Colonic mucosa (tissue), 4 donors: ENCODE measurements at regions of chrX and their contacts with region 1.

Region 1: GRCh38 chrX:132631579-132632232 is 142.9 kb upstream of the MBNL3 start:
- DNase-seq: no peak
- H3K4me3 ChIP-seq: no peak overlapping the region
- H3K27ac ChIP-seq: no peak overlapping the region
- H3K4me1 ChIP-seq: no peaks in the 10 kb centered on the region
- H3K27me3 ChIP-seq: peaks cover 4% of the 10 kb centered on the region
- CTCF ChIP-seq: peak; percentile 26

Region 2: DNA sequence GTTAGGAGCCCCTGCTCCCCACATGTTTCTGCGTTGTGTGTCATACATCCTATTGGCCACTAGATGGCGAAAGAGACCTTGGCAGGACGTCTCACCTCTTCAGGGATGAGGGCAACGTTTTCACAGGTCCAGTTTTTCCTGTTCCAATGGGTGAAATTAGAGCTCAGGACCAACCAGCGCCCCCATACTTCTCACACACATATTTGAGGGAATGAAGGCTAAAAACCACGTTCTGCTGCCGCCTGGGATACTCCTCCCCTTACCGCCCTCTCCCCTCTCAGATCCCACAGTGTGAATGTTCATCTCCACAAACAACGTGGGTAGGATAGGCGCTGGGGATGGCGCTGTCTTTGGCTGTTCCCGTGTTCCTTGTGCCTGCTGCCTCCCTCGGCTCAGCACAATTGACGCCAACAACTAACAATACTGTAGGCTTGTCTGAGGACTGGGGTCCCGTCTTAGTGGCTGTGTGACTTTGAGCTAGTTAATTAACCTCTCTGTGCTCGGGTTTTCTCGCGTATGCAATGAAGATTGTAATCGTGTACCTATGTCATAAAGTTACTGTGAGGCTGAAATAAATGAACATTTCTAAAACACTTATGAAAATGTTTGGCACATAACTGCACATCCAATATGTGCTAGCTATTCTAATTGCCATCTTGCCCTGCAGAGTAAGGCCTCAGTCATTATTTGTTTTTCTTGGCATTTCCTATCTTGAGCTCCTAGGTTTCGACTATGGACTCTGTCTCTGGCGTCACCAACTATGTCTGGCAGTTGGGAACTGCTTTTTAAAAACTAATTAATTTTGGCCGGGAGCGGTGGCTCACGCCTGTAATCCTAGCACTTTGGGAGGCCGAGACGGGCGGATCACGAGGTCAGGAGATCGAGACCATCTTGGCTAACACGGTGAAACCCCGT is 790.0 kb before region 1 on chrX:
- intact Hi-C with region 1: loop called (anchors 5 kb)
- DNase-seq: no peak
- H3K4me3 ChIP-seq: no peak overlapping the region
- H3K27ac ChIP-seq: no peak overlapping the region
- H3K4me1 ChIP-seq: no peaks in the 10 kb centered on the region
- H3K27me3 ChIP-seq: peaks cover 7% of the 10 kb centered on the region
- CTCF ChIP-seq: peak; percentile 79